Activated CD8-positive, alpha-beta T cell treated with anti-CD3 and anti-CD28 coated beads for 36 hours (primary cell): ENCODE measurements at regions of chr1 and their contacts with region 1.

Region 1: GRCh38 chr1:89762779-89763648 is 57.8 kb upstream of the LRRC8D start:
- DNase-seq: peak; percentile 91
- ATAC-seq: peak; percentile 99
- H3K4me3 Mint-ChIP-seq: peak overlapping the region; percentile 76
- H3K27ac Mint-ChIP-seq: peak overlapping the region; percentile 93
- H3K4me1 Mint-ChIP-seq: peaks cover 53% of the 10 kb centered on the region
- H3K27me3 Mint-ChIP-seq: no peaks in the 10 kb centered on the region
- CTCF ChIP-seq: peak; percentile 99

Region 2: GRCh38 chr1:89524369-89525168 is 238.4 kb before region 1 on chr1 and contains the start of gene LRRC8B:
- CTCF ChIA-PET with region 1: interaction called, 9 read pairs
- POLR2A ChIA-PET with region 1: interaction called, 3 read pairs
- intact Hi-C with region 1: loop called (anchors 10 kb)
- DNase-seq: peak; percentile 91
- ATAC-seq: peak; percentile 75
- H3K4me3 Mint-ChIP-seq: no peak within 1 kb of the TSS
- H3K27ac Mint-ChIP-seq: no peak within 1 kb of the TSS
- H3K4me1 Mint-ChIP-seq: peaks cover 31% of the 10 kb centered on the region
- H3K27me3 Mint-ChIP-seq: no peaks in the 10 kb centered on the region
- CTCF ChIP-seq: no peak
- total RNA-seq, gene LRRC8B: 24.9 to 31.7 TPM

Region 3: GRCh38 chr1:89605692-89606091 is 157.3 kb before region 1 on chr1:
- CTCF ChIA-PET with region 1: interaction called, 41 read pairs
- POLR2A ChIA-PET with region 1: interaction called, 29 read pairs
- intact Hi-C with region 1: no loop called
- DNase-seq: no peak
- ATAC-seq: no peak
- H3K4me3 Mint-ChIP-seq: peak overlapping the region; percentile 20
- H3K27ac Mint-ChIP-seq: peak overlapping the region; percentile 99
- H3K4me1 Mint-ChIP-seq: peaks cover 97% of the 10 kb centered on the region
- H3K27me3 Mint-ChIP-seq: no peaks in the 10 kb centered on the region
- CTCF ChIP-seq: no peak

Region 4: GRCh38 chr1:89632657-89633247 is 130.3 kb before region 1 on chr1 and contains the start of gene LRRC8C:
- CTCF ChIA-PET with region 1: interaction called, 147 read pairs
- POLR2A ChIA-PET with region 1: interaction called, 19 read pairs
- intact Hi-C with region 1: loop called (anchors 1 kb)
- DNase-seq: peak; percentile 90
- ATAC-seq: peak; percentile 81
- H3K4me3 Mint-ChIP-seq: peak within 1 kb of the TSS; percentile 93
- H3K27ac Mint-ChIP-seq: peak within 1 kb of the TSS; percentile 96
- H3K4me1 Mint-ChIP-seq: peaks cover 68% of the 10 kb centered on the region
- H3K27me3 Mint-ChIP-seq: no peaks in the 10 kb centered on the region
- CTCF ChIP-seq: peak; percentile 43
- total RNA-seq, gene LRRC8C: 34.4 to 37.4 TPM

Region 5: DNA sequence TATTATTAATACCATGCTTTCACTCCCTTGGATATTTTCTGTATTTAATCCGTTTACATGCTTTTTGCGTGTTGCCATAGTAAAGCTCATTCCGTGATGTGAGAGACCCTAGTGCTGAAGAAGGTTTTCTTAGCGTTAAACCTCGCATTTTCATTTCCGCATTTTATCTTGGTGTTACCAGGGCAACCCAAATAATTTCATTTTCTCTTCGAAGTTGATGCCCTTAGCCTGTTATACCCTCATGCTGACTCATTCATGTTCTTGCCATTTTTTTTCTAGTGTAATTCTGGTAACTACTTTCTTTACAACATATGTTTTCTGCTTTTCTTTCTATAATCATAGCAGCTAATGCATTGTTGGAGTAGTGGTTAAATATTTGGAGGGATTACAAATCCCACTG is 92.9 kb before region 1 on chr1:
- CTCF ChIA-PET with region 1: interaction called, 35 read pairs
- POLR2A ChIA-PET with region 1: interaction called, 6 read pairs
- intact Hi-C with region 1: no loop called
- DNase-seq: no peak
- ATAC-seq: peak; percentile 79
- H3K4me3 Mint-ChIP-seq: peak overlapping the region; percentile 34
- H3K27ac Mint-ChIP-seq: peak overlapping the region; percentile 84
- H3K4me1 Mint-ChIP-seq: peaks cover 95% of the 10 kb centered on the region
- H3K27me3 Mint-ChIP-seq: no peaks in the 10 kb centered on the region
- CTCF ChIP-seq: no peak

Region 6: GRCh38 chr1:89708751-89709375 is 54.2 kb before region 1 on chr1:
- CTCF ChIA-PET with region 1: interaction called, 72 read pairs
- POLR2A ChIA-PET with region 1: no interaction called
- intact Hi-C with region 1: no loop called
- DNase-seq: no peak
- ATAC-seq: no peak
- H3K4me3 Mint-ChIP-seq: no peak overlapping the region
- H3K27ac Mint-ChIP-seq: peak overlapping the region; percentile 49
- H3K4me1 Mint-ChIP-seq: peaks cover 63% of the 10 kb centered on the region
- H3K27me3 Mint-ChIP-seq: no peaks in the 10 kb centered on the region
- CTCF ChIP-seq: no peak

Region 7: GRCh38 chr1:89739844-89740216 is 23.2 kb before region 1 on chr1:
- CTCF ChIA-PET with region 1: interaction called, 18 read pairs
- POLR2A ChIA-PET with region 1: interaction called, 12 read pairs
- intact Hi-C with region 1: no loop called
- DNase-seq: no peak
- ATAC-seq: no peak
- H3K4me3 Mint-ChIP-seq: peak overlapping the region; percentile 70
- H3K27ac Mint-ChIP-seq: peak overlapping the region; percentile 93
- H3K4me1 Mint-ChIP-seq: peaks cover 48% of the 10 kb centered on the region
- H3K27me3 Mint-ChIP-seq: no peaks in the 10 kb centered on the region
- CTCF ChIP-seq: no peak

Region 8: DNA sequence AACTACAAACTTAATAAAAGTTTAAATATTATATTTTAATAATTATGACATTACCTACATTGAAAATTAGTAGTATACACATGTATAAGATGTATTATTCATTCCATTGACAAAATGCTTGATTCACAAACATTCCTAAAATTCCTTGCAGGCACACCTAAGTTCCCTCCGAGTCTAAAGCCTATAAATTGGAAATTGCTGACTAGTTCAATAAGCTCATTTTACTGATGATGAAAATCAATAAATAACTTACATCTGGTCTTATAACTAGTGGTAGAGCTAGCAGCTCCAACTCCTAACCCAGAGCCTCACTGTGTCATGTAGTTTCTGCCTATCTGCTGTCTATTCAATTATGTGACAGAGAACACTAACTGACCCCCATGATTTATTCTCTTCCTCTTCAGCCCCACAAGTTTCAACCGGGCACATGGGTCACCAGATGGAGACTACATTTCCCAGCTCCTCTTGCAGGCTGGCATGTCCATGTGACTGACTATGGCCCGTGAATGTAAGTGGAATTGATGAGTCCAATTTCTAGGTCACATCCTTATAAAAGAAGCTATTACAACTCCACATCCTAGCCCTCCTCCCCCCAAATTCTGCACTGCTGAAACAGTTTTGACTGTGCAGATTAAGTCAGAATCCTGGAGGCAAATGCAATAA is 28.2 kb after region 1 on chr1:
- CTCF ChIA-PET with region 1: no interaction called
- POLR2A ChIA-PET with region 1: no interaction called
- intact Hi-C with region 1: no loop called
- DNase-seq: no peak
- ATAC-seq: peak; percentile 39
- H3K4me3 Mint-ChIP-seq: no peak overlapping the region
- H3K27ac Mint-ChIP-seq: no peak overlapping the region
- H3K4me1 Mint-ChIP-seq: no peaks in the 10 kb centered on the region
- H3K27me3 Mint-ChIP-seq: no peaks in the 10 kb centered on the region
- CTCF ChIP-seq: no peak